Cardiac septum (tissue), 1 donor: ENCODE measurements at regions of chr13 and their contacts with region 1.

Region 1: GRCh38 chr13:39496440-39497010 is 106.5 kb downstream of the LHFPL6 start:
- DNase-seq: no peak

Region 2: GRCh38 chr13:39462428-39462827 is 34.1 kb before region 1 on chr13:
- intact Hi-C with region 1: loop called (anchors 5 kb)
- DNase-seq: no peak